ENCODE measurements at regions of chr12 and their contacts with region 1.

Region 1: GRCh38 chr12:21774358-21775132 is at the start of gene KCNJ8:
- DNase-seq: no peak
- H3K4me3 ChIP-seq: no peak within 1 kb of the TSS
- H3K27ac ChIP-seq: no peak within 1 kb of the TSS
- H3K4me1 ChIP-seq: no peaks in the 10 kb centered on the region
- H3K27me3 ChIP-seq: peaks cover 17% of the 10 kb centered on the region
- CTCF ChIP-seq: no peak
- polyA plus RNA-seq, gene KCNJ8: not detected in 3 replicates

Region 2: GRCh38 chr12:21710948-21711775 is 63.4 kb before region 1 on chr12:
- dilution Hi-C with region 1: loop called (anchors 5 kb)
- DNase-seq: no peak
- H3K4me3 ChIP-seq: no peak overlapping the region
- H3K27ac ChIP-seq: no peak overlapping the region
- H3K4me1 ChIP-seq: no peaks in the 10 kb centered on the region
- H3K27me3 ChIP-seq: no peaks in the 10 kb centered on the region
- CTCF ChIP-seq: no peak

Region 3: GRCh38 chr12:21865846-21866245 is 91.3 kb after region 1 on chr12:
- dilution Hi-C with region 1: no loop called
- DNase-seq: no peak
- H3K4me3 ChIP-seq: no peak overlapping the region
- H3K27ac ChIP-seq: no peak overlapping the region
- H3K4me1 ChIP-seq: no peaks in the 10 kb centered on the region
- H3K27me3 ChIP-seq: no peaks in the 10 kb centered on the region
- CTCF ChIP-seq: no peak

Measured in keratinocyte (primary cell).